ENCODE measurements at regions of chr17 and their contacts with region 1.

Region 1: DNA sequence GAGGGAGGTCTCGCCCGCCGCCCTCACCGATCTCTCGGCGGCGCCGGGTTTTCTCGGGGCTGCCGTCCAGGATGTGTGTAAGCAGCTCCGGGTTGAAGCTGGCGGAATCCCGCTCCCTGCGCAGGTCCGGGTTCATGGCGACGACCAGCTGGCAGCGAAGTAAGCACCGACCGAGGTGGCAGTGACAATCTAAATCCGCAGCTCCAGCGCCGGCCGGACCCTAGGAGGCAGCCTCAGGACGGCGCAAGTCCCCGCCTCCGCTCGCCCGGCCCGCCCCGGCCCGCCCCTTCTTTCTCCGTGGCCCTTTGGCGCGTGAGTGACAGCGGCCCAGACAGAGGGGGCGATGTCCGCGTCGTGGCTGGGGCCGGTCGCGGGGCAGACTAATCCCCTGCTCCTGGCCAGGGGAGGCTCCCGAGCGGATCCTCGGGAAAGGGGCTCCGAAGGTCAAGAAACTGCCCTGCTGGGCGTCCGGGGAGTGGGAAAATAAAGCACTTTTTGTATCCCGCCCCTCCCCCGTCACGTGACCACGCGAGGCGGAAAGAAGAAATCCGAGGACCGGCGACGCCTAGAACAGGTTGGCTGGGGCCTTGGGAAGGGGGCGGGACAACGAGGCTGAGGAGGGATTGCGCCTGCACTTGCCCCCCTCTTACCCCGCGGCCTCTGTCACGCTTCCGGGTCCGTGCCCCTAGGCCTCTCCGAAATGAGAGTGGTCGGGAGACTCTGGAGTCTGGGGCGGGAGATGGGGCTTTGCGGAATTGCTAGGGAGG is at the starts of genes ACOX1 and TEN1:
- DNase-seq: peak; percentile 84 to 96 (median 93)
- ATAC-seq: peak; percentile 95
- H3K4me3 ChIP-seq: peak within 1 kb of the TSS; percentile 89
- H3K4me3 Mint-ChIP-seq: peak within 1 kb of the TSS; percentile 91 to 99 (median 98)
- H3K27ac ChIP-seq: peak within 1 kb of the TSS; percentile 100
- H3K27ac Mint-ChIP-seq: peak within 1 kb of the TSS; percentile 98 to 100 (median 100)
- H3K4me1 ChIP-seq: peaks cover 5 to 6% of the 10 kb centered on the region in 2 donors
- H3K4me1 Mint-ChIP-seq: peaks cover 26 to 53% (median 47%) of the 10 kb centered on the region in 7 donors
- H3K27me3 ChIP-seq: no peaks in the 10 kb centered on the region
- H3K27me3 Mint-ChIP-seq: no peaks in the 10 kb centered on the region
- total RNA-seq, gene ACOX1: 22.8 to 35.0 (median 33.5) TPM
- total RNA-seq, gene TEN1: 13.1 to 20.1 (median 13.8) TPM

Region 2: GRCh38 chr17:75667021-75667790 is 311.9 kb before region 1 on chr17 and contains the starts of genes RECQL5 and SAP30BP:
- CTCF ChIA-PET with region 1: no interaction called
- POLR2A ChIA-PET with region 1: no interaction called
- intact Hi-C with region 1: loop called in 1 of 2 experiments (anchors 1 kb)
- DNase-seq: peak; percentile 94 to 98 (median 96)
- ATAC-seq: peak; percentile 100
- H3K4me3 ChIP-seq: peak within 1 kb of the TSS; percentile 99
- H3K4me3 Mint-ChIP-seq: peak within 1 kb of the TSS in 6 of 10 donors; percentile 59 to 74 (median 64)
- H3K27ac ChIP-seq: peak within 1 kb of the TSS; percentile 96
- H3K27ac Mint-ChIP-seq: peak within 1 kb of the TSS in 5 of 9 donors; percentile 6 to 83 (median 60)
- H3K4me1 ChIP-seq: peaks cover 21 to 26% of the 10 kb centered on the region in 2 donors
- H3K4me1 Mint-ChIP-seq: peaks cover 11 to 34% (median 21%) of the 10 kb centered on the region in 7 donors
- H3K27me3 ChIP-seq: no peaks in the 10 kb centered on the region
- H3K27me3 Mint-ChIP-seq: no peaks in the 10 kb centered on the region
- total RNA-seq, gene RECQL5: 38.7 to 76.5 (median 49.2) TPM
- total RNA-seq, gene SAP30BP: 97.6 to 198 (median 116) TPM

Region 3: DNA sequence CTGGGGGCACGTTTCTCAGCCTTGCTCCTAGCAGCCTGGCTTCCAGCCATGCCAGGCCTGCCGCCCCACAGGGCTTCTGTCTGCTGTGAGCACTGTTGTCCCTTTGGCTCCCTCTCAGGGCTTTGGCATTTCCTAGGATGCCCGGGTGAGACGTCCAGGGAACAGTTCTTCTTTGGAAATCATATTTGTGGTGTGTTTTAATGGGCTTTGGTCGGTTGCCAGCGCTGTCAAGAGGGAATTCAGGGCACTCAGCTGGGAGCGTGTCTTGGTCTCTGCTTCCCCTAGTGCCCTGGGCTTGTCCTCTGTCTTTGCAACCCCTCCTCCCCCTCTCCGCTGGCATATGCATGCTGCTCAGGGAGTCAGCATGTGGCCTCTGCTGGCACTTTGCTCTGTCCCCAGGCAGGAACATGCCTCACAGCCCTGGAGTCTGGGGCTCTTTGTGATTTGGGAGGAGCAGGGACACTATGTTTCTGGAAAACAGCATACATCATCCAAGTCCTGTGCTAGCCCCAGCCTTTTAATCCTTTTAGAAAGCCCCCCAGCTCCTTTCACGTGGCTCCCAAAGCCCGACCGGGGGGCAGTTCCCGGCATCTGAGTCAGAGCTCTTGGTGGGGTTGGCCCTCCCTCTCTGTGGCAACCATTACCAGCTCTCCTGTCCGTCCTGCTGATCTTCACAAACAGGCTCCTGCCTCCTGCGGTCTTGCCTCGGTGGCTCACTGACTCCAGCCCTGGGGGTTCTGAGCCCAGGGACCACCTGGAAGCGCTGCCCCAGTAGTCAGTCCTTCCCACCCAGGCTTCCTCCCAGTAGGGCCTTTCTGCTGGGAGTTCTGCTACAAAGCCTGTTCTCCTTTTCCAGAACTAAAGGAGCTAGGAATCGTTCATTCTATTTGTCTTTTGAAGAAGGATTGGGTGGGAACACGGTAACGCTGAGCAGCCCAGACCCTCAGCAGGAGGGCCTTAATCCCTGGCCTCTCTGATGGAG is 285.3 kb before region 1 on chr17:
- CTCF ChIA-PET with region 1: no interaction called
- POLR2A ChIA-PET with region 1: no interaction called
- intact Hi-C with region 1: no loop called
- DNase-seq: no peak
- ATAC-seq: no peak
- H3K4me3 ChIP-seq: no peak overlapping the region
- H3K4me3 Mint-ChIP-seq: no peak overlapping the region
- H3K27ac ChIP-seq: no peak overlapping the region
- H3K27ac Mint-ChIP-seq: no peak overlapping the region
- H3K4me1 ChIP-seq: peaks cover 0 to 20% of the 10 kb centered on the region in 2 donors
- H3K4me1 Mint-ChIP-seq: peaks cover 24 to 36% (median 35%) of the 10 kb centered on the region in 7 donors
- H3K27me3 ChIP-seq: no peaks in the 10 kb centered on the region
- H3K27me3 Mint-ChIP-seq: no peaks in the 10 kb centered on the region

Region 4: DNA sequence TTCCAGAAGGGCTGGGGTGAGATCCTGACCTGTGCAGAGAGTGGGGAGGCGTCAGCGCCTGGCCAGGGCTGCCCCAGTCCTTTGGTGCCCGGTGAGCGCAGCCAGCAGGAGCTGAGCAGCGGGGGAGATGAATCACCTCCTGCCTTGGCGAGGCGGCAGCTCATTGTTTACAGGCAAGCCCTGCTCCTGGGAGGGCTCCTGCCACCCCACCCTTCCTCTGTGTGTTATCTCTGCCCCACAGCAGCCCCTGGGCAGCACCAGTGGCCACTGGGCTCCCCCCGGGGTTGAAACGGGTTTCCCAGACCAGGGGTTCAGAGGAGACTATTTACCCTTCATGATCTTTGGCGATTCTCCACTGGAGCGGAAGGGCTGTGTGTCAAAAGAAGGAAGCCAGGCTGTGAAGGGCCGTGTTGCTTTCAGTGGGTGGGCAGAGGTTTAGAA is 272.0 kb before region 1 on chr17:
- CTCF ChIA-PET with region 1: no interaction called
- POLR2A ChIA-PET with region 1: no interaction called
- intact Hi-C with region 1: no loop called
- DNase-seq: no peak
- ATAC-seq: no peak
- H3K4me3 ChIP-seq: no peak overlapping the region
- H3K4me3 Mint-ChIP-seq: no peak overlapping the region
- H3K27ac ChIP-seq: no peak overlapping the region
- H3K27ac Mint-ChIP-seq: peak overlapping the region in 2 of 9 donors; percentile 20 to 76
- H3K4me1 ChIP-seq: no peaks in the 10 kb centered on the region
- H3K4me1 Mint-ChIP-seq: peaks cover 0 to 8% (median 0%) of the 10 kb centered on the region in 7 donors
- H3K27me3 ChIP-seq: no peaks in the 10 kb centered on the region
- H3K27me3 Mint-ChIP-seq: peaks cover 0 to 9% (median 0%) of the 10 kb centered on the region in 5 donors

Region 5: GRCh38 chr17:75877752-75878173 is 101.4 kb before region 1 on chr17:
- CTCF ChIA-PET with region 1: no interaction called
- POLR2A ChIA-PET with region 1: interaction called, 4 read pairs
- intact Hi-C with region 1: loop called in 1 of 2 experiments (anchors 1 kb)
- DNase-seq: peak; percentile 56 to 77 (median 69)
- ATAC-seq: peak; percentile 89
- H3K4me3 ChIP-seq: peak overlapping the region; percentile 74
- H3K4me3 Mint-ChIP-seq: peak overlapping the region; percentile 83 to 99 (median 90)
- H3K27ac ChIP-seq: peak overlapping the region; percentile 70
- H3K27ac Mint-ChIP-seq: peak overlapping the region; percentile 67 to 97 (median 89)
- H3K4me1 ChIP-seq: peaks cover 25 to 30% of the 10 kb centered on the region in 2 donors
- H3K4me1 Mint-ChIP-seq: peaks cover 28 to 57% (median 50%) of the 10 kb centered on the region in 7 donors
- H3K27me3 ChIP-seq: no peaks in the 10 kb centered on the region
- H3K27me3 Mint-ChIP-seq: peaks cover 0 to 28% (median 0%) of the 10 kb centered on the region in 5 donors

Region 6: GRCh38 chr17:75904749-75905521 is 74.2 kb before region 1 on chr17 and contains the start of gene MRPL38:
- CTCF ChIA-PET with region 1: no interaction called
- POLR2A ChIA-PET with region 1: interaction called, 6 read pairs
- intact Hi-C with region 1: loop called (anchors 1 kb)
- DNase-seq: peak; percentile 88 to 97 (median 91)
- ATAC-seq: peak; percentile 99
- H3K4me3 ChIP-seq: peak within 1 kb of the TSS; percentile 72
- H3K4me3 Mint-ChIP-seq: peak within 1 kb of the TSS; percentile 83 to 97 (median 92)
- H3K27ac ChIP-seq: peak within 1 kb of the TSS; percentile 85
- H3K27ac Mint-ChIP-seq: peak within 1 kb of the TSS; percentile 90 to 97 (median 95)
- H3K4me1 ChIP-seq: peaks cover 0 to 5% of the 10 kb centered on the region in 2 donors
- H3K4me1 Mint-ChIP-seq: peaks cover 2 to 16% (median 14%) of the 10 kb centered on the region in 7 donors
- H3K27me3 ChIP-seq: no peaks in the 10 kb centered on the region
- H3K27me3 Mint-ChIP-seq: no peaks in the 10 kb centered on the region
- total RNA-seq, gene MRPL38: 81.0 to 154 (median 128) TPM

Region 7: DNA sequence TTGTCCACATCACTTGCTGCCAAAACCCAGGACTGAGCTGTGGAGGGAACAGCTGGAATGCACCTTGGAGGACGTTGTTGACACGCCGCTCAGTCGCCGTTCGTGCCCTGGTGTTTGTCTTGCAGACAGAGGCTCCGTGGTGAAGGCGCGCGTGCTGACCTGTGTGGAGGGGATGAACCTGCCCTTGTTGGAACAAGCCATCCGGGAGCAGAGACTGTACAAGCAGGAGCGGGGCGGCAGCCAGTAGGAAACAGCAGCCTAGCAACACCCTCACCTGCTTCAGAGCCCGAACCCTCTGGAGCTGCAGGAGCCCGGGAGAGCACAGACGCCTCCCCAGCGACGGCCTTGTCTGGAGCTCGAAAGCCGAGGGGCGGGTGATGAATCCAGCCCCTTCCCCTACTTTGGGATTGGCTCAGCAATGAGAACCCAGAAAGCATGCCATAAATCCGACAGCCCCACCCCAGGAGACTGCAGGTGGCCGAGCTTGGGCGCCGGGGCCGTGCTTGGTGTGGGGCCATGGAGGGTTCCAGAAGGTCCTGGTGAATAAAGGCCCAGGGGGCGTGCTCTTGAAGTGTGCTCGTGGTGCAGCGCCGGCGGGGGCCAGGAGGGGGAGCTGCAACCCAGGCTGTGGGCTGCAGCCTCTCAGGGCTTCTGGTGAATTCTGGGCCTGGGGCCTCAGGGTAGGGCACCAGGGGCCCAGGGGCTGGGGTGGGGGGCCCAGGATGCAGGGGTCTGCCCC is 21.1 kb after region 1 on chr17:
- CTCF ChIA-PET with region 1: interaction called, 4 read pairs
- POLR2A ChIA-PET with region 1: interaction called, 10 read pairs
- intact Hi-C with region 1: loop called in 1 of 2 experiments (anchors 1 kb)
- DNase-seq: peak; percentile 27 to 76 (median 56)
- ATAC-seq: peak; percentile 77
- H3K4me3 ChIP-seq: no peak overlapping the region
- H3K4me3 Mint-ChIP-seq: no peak overlapping the region
- H3K27ac ChIP-seq: no peak overlapping the region
- H3K27ac Mint-ChIP-seq: peak overlapping the region in 1 of 9 donors; percentile 43
- H3K4me1 ChIP-seq: peaks cover 9 to 12% of the 10 kb centered on the region in 2 donors
- H3K4me1 Mint-ChIP-seq: peaks cover 14 to 25% (median 14%) of the 10 kb centered on the region in 7 donors
- H3K27me3 ChIP-seq: no peaks in the 10 kb centered on the region
- H3K27me3 Mint-ChIP-seq: no peaks in the 10 kb centered on the region

Region 8: DNA sequence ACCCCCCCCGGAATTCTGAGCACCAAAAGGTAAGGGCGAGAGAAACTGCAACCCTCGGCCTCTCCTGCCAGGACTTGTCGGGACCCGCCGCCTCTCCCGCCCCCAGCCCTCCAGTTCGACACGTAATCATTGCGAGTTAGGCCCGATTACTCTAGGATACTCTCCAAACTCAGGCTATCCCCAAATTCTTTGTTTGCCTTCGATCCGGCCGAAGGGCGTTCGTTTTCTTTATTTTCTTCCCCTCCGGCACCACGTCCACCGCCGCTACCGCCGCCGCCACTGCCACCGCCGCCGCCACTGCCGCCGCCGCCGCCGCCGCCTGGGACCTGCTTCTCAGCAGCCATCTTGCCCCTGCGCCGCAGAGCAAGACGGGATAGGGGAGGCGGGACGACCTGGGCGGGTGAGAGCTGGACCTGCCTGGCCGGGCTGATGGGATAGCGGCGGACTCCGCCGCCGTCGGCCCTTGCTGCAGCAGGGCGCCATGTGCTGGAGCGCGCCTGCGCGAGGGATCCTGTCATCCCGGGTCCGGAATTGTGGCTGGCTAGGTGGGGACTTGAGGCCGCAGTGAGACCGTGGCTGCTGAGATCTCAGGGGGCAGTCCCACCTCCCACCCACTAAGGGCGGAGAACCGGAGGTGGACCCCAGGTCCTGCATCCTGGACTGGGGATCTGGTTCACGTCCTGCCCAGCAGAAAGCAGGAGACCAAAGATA is 93.2 kb after region 1 on chr17 and contains the start of gene SRP68:
- CTCF ChIA-PET with region 1: no interaction called
- POLR2A ChIA-PET with region 1: no interaction called
- intact Hi-C with region 1: no loop called
- DNase-seq: peak; percentile 63 to 86 (median 74)
- ATAC-seq: peak; percentile 92
- H3K4me3 ChIP-seq: peak within 1 kb of the TSS; percentile 89
- H3K4me3 Mint-ChIP-seq: peak within 1 kb of the TSS; percentile 85 to 98 (median 97)
- H3K27ac ChIP-seq: peak within 1 kb of the TSS; percentile 93
- H3K27ac Mint-ChIP-seq: peak within 1 kb of the TSS; percentile 90 to 98 (median 95)
- H3K4me1 ChIP-seq: peaks cover 10 to 37% of the 10 kb centered on the region in 2 donors
- H3K4me1 Mint-ChIP-seq: peaks cover 21 to 62% (median 52%) of the 10 kb centered on the region in 7 donors
- H3K27me3 ChIP-seq: peaks cover 13 to 14% of the 10 kb centered on the region in 2 donors
- H3K27me3 Mint-ChIP-seq: peaks cover 17 to 37% (median 24%) of the 10 kb centered on the region in 5 donors
- total RNA-seq, gene SRP68: 70.8 to 105 (median 91.9) TPM

Region 9: GRCh38 chr17:76166168-76166567 is 187.0 kb after region 1 on chr17:
- CTCF ChIA-PET with region 1: no interaction called
- POLR2A ChIA-PET with region 1: no interaction called
- intact Hi-C with region 1: no loop called
- DNase-seq: no peak
- ATAC-seq: no peak
- H3K4me3 ChIP-seq: no peak overlapping the region
- H3K4me3 Mint-ChIP-seq: peak overlapping the region in 1 of 10 donors; percentile 30
- H3K27ac ChIP-seq: no peak overlapping the region
- H3K27ac Mint-ChIP-seq: peak overlapping the region in 6 of 9 donors; percentile 14 to 55 (median 39)
- H3K4me1 ChIP-seq: no peaks in the 10 kb centered on the region
- H3K4me1 Mint-ChIP-seq: peaks cover 7 to 36% (median 24%) of the 10 kb centered on the region in 7 donors
- H3K27me3 ChIP-seq: no peaks in the 10 kb centered on the region
- H3K27me3 Mint-ChIP-seq: no peaks in the 10 kb centered on the region

Region 10: GRCh38 chr17:76671123-76671911 is 692.2 kb after region 1 on chr17:
- CTCF ChIA-PET with region 1: no interaction called
- POLR2A ChIA-PET with region 1: no interaction called
- intact Hi-C with region 1: loop called in 1 of 2 experiments (anchors 2 kb)
- DNase-seq: peak; percentile 90 to 99 (median 98)
- ATAC-seq: peak; percentile 99
- H3K4me3 ChIP-seq: peak overlapping the region; percentile 76
- H3K4me3 Mint-ChIP-seq: peak overlapping the region; percentile 81 to 98 (median 92)
- H3K27ac ChIP-seq: peak overlapping the region; percentile 84
- H3K27ac Mint-ChIP-seq: peak overlapping the region; percentile 88 to 99 (median 96)
- H3K4me1 ChIP-seq: peaks cover 19 to 26% of the 10 kb centered on the region in 2 donors
- H3K4me1 Mint-ChIP-seq: peaks cover 20 to 43% (median 31%) of the 10 kb centered on the region in 7 donors
- H3K27me3 ChIP-seq: no peaks in the 10 kb centered on the region
- H3K27me3 Mint-ChIP-seq: peaks cover 0 to 10% (median 0%) of the 10 kb centered on the region in 5 donors